ENCODE measurements at regions of chr12 and their contacts with region 1.

Region 1: DNA sequence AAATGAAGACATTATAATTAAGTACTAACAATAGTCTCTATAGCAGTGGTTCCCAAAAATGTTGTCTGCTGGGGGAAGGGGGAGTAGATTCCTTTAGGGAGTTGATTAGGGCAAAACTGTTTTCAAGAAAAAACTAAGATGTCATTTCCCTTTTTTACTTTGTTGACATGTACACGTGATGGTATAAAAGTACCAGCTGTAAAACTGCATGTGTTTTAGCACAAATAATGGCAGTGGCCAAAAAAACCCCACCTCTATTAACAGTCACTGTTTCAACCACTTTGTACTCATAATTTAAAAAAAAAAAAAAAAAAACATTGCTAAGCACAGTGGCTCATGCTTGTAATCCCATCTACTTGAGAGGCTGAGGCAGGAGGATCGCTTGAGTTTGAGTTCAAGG is 61.7 kb downstream of the PPP1R12A start:
- DNase-seq: no peak
- H3K4me3 ChIP-seq: no peak overlapping the region
- CTCF ChIP-seq: no peak

Region 2: DNA sequence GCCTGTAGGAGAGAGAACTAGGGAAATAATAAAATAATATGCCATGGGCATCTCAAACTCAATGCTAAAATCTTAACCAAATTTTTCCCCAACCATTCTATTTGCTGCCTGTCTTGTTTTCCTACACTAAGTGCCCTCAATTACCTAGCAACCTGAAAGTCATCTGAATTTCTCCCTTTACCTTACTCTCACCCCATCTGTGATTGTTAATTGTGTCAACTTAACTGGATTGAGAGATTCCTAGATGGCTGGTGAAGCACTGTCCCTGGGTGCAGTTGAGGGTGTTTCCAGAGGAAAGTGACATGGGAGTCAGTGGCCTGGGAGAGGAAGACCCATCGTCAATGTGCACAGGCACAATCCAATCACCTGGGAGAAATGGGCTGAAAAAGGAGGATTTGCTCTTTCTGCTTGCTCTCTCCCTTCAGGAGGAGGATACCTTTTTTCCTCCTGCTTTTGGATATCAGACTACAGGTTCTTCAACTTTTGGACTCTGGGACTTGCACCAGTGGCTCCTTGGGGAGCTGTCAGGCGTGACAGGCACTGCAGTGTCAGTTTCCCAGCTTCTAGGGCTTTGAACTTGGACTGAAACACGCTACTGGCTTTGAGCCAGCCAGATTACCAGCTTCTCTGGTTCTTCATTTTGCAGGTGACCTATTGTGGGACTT is 38.4 kb before region 1 on chr12:
- in situ Hi-C with region 1: loop called (anchors 5 kb)
- DNase-seq: no peak
- H3K4me3 ChIP-seq: no peak overlapping the region
- CTCF ChIP-seq: no peak

Measured in astrocyte of the cerebellum (primary cell).